KBM-7 (cell line): ENCODE measurements at regions of chr17 and their contacts with region 1.

Region 1: DNA sequence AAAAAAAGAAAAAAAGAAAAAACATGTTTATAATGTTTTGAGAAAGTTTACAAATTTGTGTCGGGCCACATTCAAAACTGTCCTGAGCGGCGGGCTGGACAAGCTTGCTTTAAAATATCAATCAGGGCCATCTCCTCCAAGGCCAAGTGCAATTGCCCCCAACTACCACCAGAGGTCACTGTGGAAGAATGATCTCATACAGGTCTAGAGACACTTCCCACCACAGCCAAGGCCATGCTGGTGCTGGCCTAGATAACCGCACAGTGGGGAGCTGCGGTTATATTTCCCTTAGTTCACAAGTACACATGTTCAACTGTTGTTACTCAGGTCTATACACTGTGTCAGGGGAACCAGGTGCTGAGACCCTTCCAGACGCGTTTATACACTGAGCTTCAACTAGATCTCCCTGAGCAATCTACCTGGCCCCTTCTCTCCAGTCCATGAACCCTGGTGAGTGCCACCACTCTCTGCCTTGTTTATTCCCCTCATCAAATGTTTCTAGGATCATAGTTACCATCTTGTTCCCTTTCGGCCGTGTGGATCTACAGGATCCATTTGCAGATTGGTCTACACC is 83.8 kb upstream of the CCL2 start:
- DNase-seq: peak; percentile 74

Region 2: DNA sequence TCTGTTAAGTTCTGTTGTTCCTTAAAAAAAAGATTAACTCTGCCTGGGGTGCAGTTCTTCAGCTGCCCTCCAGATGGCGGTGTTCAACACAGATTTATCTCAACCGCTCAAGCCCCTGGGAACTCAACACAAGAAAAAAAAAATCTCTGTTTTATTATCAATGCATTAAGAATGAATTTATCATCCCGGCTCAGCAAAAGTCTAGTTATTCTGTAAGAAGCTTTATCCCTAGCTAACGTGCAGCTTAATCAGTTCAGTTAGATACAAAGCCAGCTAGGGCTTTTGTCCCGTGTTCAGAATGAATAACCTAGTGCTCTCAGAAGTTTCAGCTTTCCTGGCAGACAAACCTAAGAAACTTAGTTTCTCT is 392.1 kb before region 1 on chr17:
- in situ Hi-C with region 1: loop called (anchors 25 kb)
- DNase-seq: peak; percentile 80

Region 3: GRCh38 chr17:34098699-34099098 is 72.6 kb before region 1 on chr17:
- in situ Hi-C with region 1: no loop called
- DNase-seq: no peak